ENCODE measurements at regions of chr17 and their contacts with region 1.

Region 1: DNA sequence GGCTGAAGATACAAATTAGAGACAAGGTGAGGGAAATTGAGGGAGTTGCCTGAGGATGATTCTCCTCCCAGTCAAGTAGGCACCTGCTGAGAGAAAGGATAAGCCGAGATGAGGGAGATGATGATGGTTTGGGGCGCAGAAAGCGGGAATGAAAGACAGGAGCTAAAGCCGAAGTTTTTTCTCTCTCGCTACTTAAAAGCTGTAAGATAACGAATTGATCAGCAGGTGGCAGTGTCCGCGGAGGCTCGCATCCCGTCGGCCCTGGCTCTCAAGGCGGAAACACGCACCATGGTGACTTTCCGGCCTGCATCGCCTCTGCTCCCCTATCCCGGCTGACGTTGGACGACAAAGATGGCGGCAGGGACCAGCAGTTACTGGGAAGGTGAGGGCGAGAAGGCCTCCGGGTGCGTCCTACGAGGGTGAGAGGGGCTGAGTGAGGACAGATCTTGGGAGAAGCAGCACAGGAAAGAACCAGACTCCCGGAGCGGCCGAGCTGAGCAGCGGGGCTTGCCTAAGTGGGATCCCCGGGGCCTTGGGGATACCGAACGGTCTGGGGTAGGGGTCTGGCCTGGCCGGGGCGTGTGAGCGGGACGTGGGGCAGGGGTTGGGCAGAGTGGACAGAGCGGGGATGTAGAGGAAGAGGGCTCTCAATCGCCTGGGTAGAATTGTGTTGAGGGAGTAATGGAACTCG is at the start of gene GOSR1:
- DNase-seq: peak; percentile 89
- H3K4me3 ChIP-seq: peak within 1 kb of the TSS; percentile 58 to 99
- H3K27ac ChIP-seq: peak within 1 kb of the TSS; percentile 78 to 86
- H3K4me1 ChIP-seq: peaks cover 5 to 13% of the 10 kb centered on the region in 2 experiments; a peak in 3 of 4 replicates
- H3K27me3 ChIP-seq: no peaks in the 10 kb centered on the region
- CTCF ChIP-seq: peak; percentile 75
- EP300 ChIP-seq: no peak; a peak in 1 of 4 replicates
- RAD21 ChIP-seq: peak; percentile 59
- polyA plus RNA-seq, gene GOSR1: 12.5 and 13.7 TPM in 2 replicates

Region 2: GRCh38 chr17:30454635-30455034 is 22.6 kb before region 1 on chr17:
- CTCF ChIA-PET with region 1: interaction called, 12 read pairs
- POLR2A ChIA-PET with region 1: no interaction called
- DNase-seq: no peak
- H3K4me3 ChIP-seq: no peak overlapping the region
- H3K27ac ChIP-seq: no peak overlapping the region
- H3K4me1 ChIP-seq: no peaks in the 10 kb centered on the region
- H3K27me3 ChIP-seq: no peaks in the 10 kb centered on the region
- CTCF ChIP-seq: no peak
- EP300 ChIP-seq: no peak
- RAD21 ChIP-seq: no peak

Region 3: GRCh38 chr17:30495586-30495985 is 18.4 kb after region 1 on chr17:
- CTCF ChIA-PET with region 1: interaction called, 20 read pairs
- POLR2A ChIA-PET with region 1: no interaction called
- DNase-seq: no peak
- H3K4me3 ChIP-seq: no peak overlapping the region
- H3K27ac ChIP-seq: no peak overlapping the region
- H3K4me1 ChIP-seq: no peaks in the 10 kb centered on the region
- H3K27me3 ChIP-seq: no peaks in the 10 kb centered on the region
- CTCF ChIP-seq: no peak
- EP300 ChIP-seq: no peak
- RAD21 ChIP-seq: no peak

Measured in SK-N-SH (cell line).